ENCODE measurements at regions of chr5 and their contacts with region 1.

Region 1: DNA sequence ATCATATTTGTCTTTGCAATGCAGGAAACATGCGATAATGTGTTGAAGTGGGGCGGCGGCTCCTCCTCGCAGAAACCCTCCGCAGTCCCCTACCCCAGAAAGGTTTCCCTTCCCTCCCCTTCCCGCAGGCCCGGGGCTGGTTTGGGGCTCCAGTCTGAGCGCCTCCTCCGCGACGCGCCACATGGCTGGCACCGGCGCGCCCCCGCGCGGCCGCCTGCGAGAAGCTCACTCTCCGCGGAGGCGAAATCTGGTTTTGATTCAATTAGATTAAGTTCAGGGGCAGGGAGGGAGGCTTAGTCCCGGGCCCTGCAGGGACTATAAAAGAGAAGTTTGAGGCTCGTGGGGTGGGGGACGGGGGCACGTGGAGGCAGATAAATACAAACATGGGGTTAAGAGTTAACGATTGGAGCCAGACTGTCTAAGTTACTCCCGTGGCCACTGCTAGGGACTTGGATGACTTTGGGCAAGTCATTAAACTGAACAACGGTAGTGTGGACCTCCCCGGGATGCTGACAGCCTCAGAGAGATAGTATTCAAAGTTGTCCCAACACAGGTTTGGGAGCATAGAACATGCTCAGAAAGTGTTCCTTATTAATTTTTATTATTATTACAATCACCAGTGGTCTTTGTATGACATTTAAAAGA is 69.4 kb downstream of the MSX2 start:
- DNase-seq: peak; percentile 80
- H3K4me3 ChIP-seq: peak overlapping the region in 1 of 2 donors; percentile 37
- H3K27ac ChIP-seq: no peak overlapping the region
- H3K4me1 ChIP-seq: no peaks in the 10 kb centered on the region
- H3K27me3 ChIP-seq: no peaks in the 10 kb centered on the region
- CTCF ChIP-seq: peak; percentile 42 to 82 (median 70)
- POLR2A ChIP-seq: no peak

Region 2: GRCh38 chr5:174424219-174425053 is 369.4 kb before region 1 on chr5:
- intact Hi-C with region 1: loop called (anchors 10 kb)
- DNase-seq: peak; percentile 59
- H3K4me3 ChIP-seq: no peak overlapping the region
- H3K27ac ChIP-seq: no peak overlapping the region
- H3K4me1 ChIP-seq: peaks cover 15% of the 10 kb centered on the region
- H3K27me3 ChIP-seq: no peaks in the 10 kb centered on the region
- CTCF ChIP-seq: peak in 1 of 3 experiments; percentile 7
- POLR2A ChIP-seq: no peak

Measured in testis (tissue), 5 donors.